KBM-7 (cell line): ENCODE measurements at regions of chr15 and their contacts with region 1.

Region 1: DNA sequence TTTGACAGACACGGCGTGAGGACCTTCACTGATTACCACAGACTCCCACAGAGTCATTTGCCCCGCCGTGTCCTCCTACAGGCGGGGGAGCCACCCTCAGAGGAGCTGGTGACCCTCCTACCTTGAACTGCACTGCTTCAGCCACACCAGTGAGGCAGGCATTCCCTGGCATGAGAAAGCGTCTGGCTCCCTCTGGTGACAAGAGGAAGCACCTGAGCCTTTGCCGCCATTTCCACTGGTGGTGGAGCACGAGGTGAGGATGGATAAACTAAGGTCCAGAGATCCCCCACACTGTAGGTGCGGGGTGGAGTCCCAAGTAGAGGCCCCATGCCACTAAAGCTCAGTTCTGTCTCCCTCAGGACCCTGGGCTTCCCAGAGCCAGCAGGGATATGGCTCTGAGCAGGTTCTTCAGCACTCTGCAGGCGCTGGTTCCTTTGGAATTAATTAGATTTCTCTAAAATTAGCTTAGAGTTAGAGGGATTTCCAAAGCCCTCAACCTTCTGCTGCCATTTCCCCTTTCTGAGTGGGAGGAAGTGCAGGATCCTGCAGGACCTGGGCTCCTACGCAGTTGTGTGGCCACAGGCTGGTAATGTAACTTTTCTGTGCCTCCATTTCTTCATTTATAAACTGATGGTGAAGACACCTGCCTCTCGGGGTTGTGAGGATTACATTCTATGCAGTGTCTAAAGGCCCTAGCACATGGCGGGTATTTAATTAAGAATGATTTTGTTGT is 224.0 kb downstream of the SLCO3A1 start:
- DNase-seq: peak; percentile 75

Region 2: DNA sequence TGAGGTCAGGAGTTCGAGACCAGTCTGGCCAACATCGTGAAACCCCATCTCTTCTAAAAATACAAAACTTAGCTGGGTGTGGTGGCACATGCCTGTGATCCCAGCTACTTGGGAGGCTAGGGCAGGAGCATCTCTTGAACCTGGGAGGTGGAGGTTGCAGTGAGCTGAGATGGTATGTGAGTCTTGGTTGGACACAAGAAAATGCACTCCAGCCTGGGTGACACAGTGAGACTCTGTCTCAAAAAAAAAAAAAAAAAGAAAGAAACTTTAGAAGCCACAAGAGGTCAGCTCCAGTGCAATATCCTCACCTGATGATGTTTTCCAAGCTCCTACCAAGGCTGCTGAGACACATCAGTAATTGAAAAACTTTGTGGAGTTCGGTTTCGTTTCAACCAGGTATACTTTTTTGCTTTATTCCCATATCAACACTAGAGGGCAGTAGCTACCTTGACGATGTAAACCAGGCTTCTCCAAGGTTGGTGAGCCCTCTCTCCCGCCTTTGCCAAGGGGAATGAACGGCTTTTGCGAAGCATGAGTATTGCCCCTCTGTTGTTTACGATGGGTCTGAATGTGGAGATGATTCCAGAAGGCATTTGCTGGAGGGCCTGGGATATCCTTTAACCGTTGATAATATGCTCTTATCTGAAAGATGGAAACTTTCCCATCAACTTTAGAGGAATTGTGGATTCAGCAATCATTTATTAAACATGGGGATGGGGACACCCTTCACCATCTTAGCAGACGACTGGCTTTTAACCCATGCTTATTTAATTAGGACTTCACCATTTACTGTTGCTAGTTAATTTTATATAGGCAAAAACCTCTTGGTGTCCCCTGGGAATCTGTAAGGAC is 774.7 kb before region 1 on chr15:
- in situ Hi-C with region 1: loop called (anchors 25 kb)
- DNase-seq: peak; percentile 61

Region 3: GRCh38 chr15:91908391-91908790 is 169.1 kb before region 1 on chr15:
- in situ Hi-C with region 1: no loop called
- DNase-seq: no peak